A549 (cell line): ENCODE measurements at regions of chr2 and their contacts with region 1.

Region 1: GRCh38 chr2:112726497-112727190 is 5.8 kb downstream of the NT5DC4 start:
- DNase-seq: peak; percentile 92 to 93
- ATAC-seq: peak; percentile 84 to 95
- H3K4me3 ChIP-seq: no peak overlapping the region
- H3K27ac ChIP-seq: peak overlapping the region; percentile 81 to 86
- H3K4me1 ChIP-seq: peaks cover 21% of the 10 kb centered on the region
- CTCF ChIP-seq: peak; percentile 97
- EP300 ChIP-seq: no peak
- POLR2A ChIP-seq: no peak
- RAD21 ChIP-seq: peak; percentile 99 to 100

Region 2: DNA sequence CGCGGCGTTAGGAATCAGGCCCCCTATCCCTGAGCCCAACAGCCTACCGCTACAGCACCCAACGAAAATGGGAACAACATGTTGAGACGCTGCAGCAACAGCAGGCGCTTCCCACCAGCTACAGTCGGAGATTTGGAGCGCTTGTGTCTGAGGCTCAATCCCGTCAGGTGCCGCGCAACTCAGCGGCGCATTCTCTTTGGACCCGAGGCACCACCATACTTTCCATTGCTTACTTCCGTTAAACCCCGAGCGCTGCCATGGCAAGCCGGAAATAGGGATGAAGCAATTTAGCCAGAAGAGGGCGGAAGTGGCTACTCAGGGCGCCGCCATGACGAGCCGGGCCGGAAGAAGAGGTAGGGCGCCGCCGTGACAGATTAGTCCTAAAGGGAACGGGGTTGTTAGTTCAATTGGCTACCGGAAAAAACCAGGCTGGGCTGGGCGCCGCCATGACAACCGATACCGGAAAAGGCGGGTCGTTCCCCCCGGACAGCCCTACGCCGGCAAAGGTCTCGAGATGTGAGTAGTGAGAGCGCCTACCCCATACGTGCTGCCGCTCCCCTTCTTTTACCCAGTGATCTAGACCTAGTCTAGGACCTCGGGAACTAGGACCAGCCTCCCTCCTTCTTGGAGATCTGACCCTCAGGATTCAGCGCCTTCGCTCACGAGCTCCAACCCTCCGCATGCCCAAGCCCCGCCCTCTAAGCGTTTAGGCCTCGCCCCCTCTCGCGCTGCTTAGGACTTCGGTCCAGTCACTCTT is 142.3 kb before region 1 on chr2 and contains the start of gene CHCHD5:
- CTCF ChIA-PET with region 1: interaction called, 31 read pairs
- POLR2A ChIA-PET with region 1: interaction called, 4 read pairs
- DNase-seq: peak; percentile 89 to 97
- ATAC-seq: peak; percentile 88 to 92
- H3K4me3 ChIP-seq: peak within 1 kb of the TSS; percentile 55
- H3K27ac ChIP-seq: peak within 1 kb of the TSS; percentile 96 to 97
- H3K4me1 ChIP-seq: peaks cover 21% of the 10 kb centered on the region
- CTCF ChIP-seq: no peak
- EP300 ChIP-seq: no peak; a peak in 1 of 5 replicates
- POLR2A ChIP-seq: peak; percentile 57
- RAD21 ChIP-seq: no peak
- polyA plus RNA-seq, gene CHCHD5: 15.0 and 17.6 TPM in 2 replicates

Region 3: GRCh38 chr2:112626604-112627059 is 100.0 kb before region 1 on chr2:
- CTCF ChIA-PET with region 1: interaction called, 343 read pairs
- POLR2A ChIA-PET with region 1: interaction called, 5 read pairs
- DNase-seq: peak; percentile 64 to 75
- ATAC-seq: peak; percentile 79 to 88
- H3K4me3 ChIP-seq: peak overlapping the region; percentile 15; the same call in 2 of the 3 replicates
- H3K27ac ChIP-seq: peak overlapping the region; percentile 90 to 93
- H3K4me1 ChIP-seq: peaks cover 99% of the 10 kb centered on the region
- CTCF ChIP-seq: peak; percentile 96
- EP300 ChIP-seq: no peak
- POLR2A ChIP-seq: no peak
- RAD21 ChIP-seq: peak; percentile 95

Region 4: GRCh38 chr2:112666764-112667122 is 59.9 kb before region 1 on chr2:
- CTCF ChIA-PET with region 1: interaction called, 82 read pairs
- POLR2A ChIA-PET with region 1: no interaction called
- DNase-seq: no peak
- ATAC-seq: peak; percentile 11 to 36; a peak in 5 of 6 replicates
- H3K4me3 ChIP-seq: no peak overlapping the region
- H3K27ac ChIP-seq: no peak overlapping the region
- H3K4me1 ChIP-seq: peaks cover 16% of the 10 kb centered on the region
- CTCF ChIP-seq: no peak
- EP300 ChIP-seq: no peak
- POLR2A ChIP-seq: no peak
- RAD21 ChIP-seq: no peak

Region 5: DNA sequence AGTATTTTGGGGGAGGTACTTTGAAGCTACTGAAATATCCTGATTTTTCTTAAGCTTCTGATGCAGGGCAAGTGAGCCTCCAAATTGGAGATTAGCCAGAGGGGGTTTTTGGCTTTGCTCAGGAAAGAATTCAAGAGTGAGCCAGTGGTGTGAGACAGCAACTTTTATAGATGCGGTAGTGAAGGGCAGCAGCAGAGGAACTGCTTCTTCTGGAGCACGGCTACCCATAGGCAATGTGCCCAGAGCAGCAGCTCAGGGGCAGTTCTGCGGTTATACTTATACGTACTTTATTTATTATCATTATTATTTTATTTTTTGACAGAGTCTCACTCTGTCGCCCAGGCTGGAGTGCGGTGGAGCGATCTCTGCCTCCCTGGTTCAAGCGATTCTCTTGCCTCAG is 25.6 kb before region 1 on chr2:
- CTCF ChIA-PET with region 1: interaction called, 55 read pairs
- POLR2A ChIA-PET with region 1: no interaction called
- DNase-seq: no peak
- ATAC-seq: no peak
- H3K4me3 ChIP-seq: no peak overlapping the region
- H3K27ac ChIP-seq: peak overlapping the region in 1 of 2 experiments; percentile 14; a peak in 1 of 6 replicates
- H3K4me1 ChIP-seq: no peaks in the 10 kb centered on the region
- CTCF ChIP-seq: no peak
- EP300 ChIP-seq: no peak
- POLR2A ChIP-seq: no peak
- RAD21 ChIP-seq: no peak

Region 6: DNA sequence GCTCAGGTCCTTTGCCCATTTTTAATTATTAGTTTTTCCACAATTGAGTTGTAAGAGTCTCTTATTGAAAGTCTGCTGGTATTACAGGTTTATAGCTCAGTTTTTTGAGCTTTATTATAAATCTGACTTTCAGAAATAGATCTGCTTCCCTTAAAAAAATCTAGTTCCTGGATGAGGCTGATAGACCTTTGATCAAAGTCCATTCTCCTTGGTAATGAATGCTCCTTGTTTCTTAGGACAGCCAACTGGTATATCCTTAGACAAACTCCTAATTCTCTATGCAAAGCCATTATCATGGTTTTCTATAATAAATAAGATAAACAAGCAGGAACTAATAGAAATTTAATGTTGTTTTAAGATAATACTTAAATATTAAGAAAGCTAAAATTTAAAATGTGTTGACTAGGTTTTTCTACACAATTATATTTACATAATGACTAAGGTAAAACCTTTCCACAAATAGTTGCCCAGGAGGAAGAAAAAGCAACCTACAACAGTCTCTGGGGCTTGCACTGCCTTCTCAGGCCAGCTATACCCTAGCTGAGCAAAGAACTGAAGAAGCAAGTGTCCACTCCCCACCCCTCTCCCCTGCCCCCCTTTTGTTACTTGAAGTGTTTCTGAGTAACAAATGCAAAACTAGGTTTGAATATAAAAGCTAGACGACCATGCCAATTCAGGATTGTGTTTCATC is 11.0 kb after region 1 on chr2:
- CTCF ChIA-PET with region 1: interaction called, 80 read pairs
- POLR2A ChIA-PET with region 1: no interaction called
- DNase-seq: no peak
- ATAC-seq: 0 out of 6 replicates have a peak, but pooled peaks of 1 of the 2 experiments have one; percentile 38
- H3K4me3 ChIP-seq: no peak overlapping the region
- H3K27ac ChIP-seq: peak overlapping the region in 1 of 2 experiments; percentile 13; a peak in 1 of 6 replicates
- H3K4me1 ChIP-seq: peaks cover 18% of the 10 kb centered on the region
- CTCF ChIP-seq: no peak
- EP300 ChIP-seq: no peak
- POLR2A ChIP-seq: no peak
- RAD21 ChIP-seq: no peak

Region 7: GRCh38 chr2:112800881-112801583 is 74.4 kb after region 1 on chr2:
- CTCF ChIA-PET with region 1: no interaction called
- POLR2A ChIA-PET with region 1: no interaction called
- DNase-seq: no peak
- ATAC-seq: no peak
- H3K4me3 ChIP-seq: no peak overlapping the region
- H3K27ac ChIP-seq: no peak overlapping the region
- H3K4me1 ChIP-seq: peaks cover 14% of the 10 kb centered on the region; the same call in 2 of the 3 replicates
- CTCF ChIP-seq: no peak
- EP300 ChIP-seq: no peak
- POLR2A ChIP-seq: no peak
- RAD21 ChIP-seq: no peak